IMR-90 (cell line): ENCODE measurements at regions of chr5 and their contacts with region 1.

Region 1: GRCh38 chr5:123720955-123721354 is 209.0 kb downstream of the CSNK1G3 start:
- DNase-seq: peak; percentile 7
- ATAC-seq: no peak
- H3K4me3 ChIP-seq: no peak overlapping the region
- H3K27ac ChIP-seq: no peak overlapping the region
- H3K4me1 ChIP-seq: peaks cover 4% of the 10 kb centered on the region; the same call in 1 of the 2 replicates
- H3K27me3 ChIP-seq: no peaks in the 10 kb centered on the region
- CTCF ChIP-seq: no peak
- POLR2A ChIP-seq: no peak
- RAD21 ChIP-seq: no peak

Region 2: DNA sequence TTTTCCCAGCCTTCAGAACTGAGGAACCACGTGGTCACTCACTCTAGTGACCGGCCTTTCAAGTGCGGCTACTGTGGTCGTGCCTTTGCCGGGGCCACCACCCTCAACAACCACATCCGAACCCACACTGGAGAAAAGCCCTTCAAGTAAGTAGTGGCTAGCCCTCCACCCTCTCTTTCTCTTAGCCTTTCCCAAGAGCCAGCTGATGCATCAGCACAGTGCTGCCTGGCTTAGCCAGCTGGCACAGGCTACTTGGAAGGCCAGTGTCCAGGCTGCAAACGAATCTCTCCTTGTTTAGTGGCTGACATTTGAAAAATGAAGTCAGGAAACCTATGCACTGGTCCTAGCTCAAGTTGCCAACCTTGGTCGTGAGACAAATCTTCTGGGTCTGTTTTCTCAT is 540.8 kb before region 1 on chr5:
- CTCF ChIA-PET with region 1: no interaction called
- POLR2A ChIA-PET with region 1: no interaction called
- dilution Hi-C with region 1: no loop called
- in situ Hi-C with region 1: no loop called
- intact Hi-C with region 1: no loop called
- DNase-seq: no peak
- ATAC-seq: no peak
- H3K4me3 ChIP-seq: no peak overlapping the region
- H3K27ac ChIP-seq: no peak overlapping the region
- H3K4me1 ChIP-seq: no peaks in the 10 kb centered on the region; the same call in 1 of the 2 replicates
- H3K27me3 ChIP-seq: no peaks in the 10 kb centered on the region; the same call in 1 of the 2 replicates
- CTCF ChIP-seq: no peak
- POLR2A ChIP-seq: no peak
- RAD21 ChIP-seq: no peak

Region 3: DNA sequence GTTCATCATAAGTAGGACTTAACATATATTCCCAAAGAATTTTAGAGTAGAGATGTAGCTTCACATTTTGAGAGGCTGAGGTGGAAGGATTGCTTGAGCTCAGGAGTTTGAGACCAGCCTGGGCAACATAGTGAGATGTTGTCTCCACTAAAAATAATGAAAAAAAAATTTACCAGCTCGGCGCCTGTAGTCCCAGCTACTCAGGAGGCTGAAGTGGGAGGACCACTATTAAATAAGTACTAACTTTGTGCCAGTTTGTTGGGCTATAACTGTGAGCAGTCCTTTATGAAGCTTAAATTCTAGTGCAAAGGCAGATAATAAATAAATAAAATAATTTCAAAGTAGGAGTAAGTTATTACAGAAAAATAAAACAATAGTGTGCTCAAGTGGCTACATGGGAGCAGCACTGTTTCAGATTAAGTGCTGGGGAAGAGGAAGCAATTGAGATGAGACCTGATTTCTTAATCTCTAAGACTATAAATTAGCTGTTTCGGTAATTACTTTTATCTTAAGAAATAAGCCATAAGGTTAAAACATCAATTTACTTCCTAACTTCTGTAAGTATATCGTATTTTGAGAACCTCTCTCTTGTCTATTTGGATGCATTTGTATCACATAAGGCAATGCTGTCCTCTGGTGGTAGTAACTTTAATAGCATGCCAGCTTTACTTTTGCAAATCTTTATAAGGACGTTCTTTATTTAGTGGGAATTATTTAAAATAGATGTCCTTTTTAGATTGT is 110.1 kb before region 1 on chr5:
- CTCF ChIA-PET with region 1: no interaction called
- POLR2A ChIA-PET with region 1: no interaction called
- dilution Hi-C with region 1: no loop called
- in situ Hi-C with region 1: no loop called
- intact Hi-C with region 1: no loop called
- DNase-seq: peak; percentile 80
- ATAC-seq: peak; percentile 81
- H3K4me3 ChIP-seq: no peak overlapping the region
- H3K27ac ChIP-seq: no peak overlapping the region
- H3K4me1 ChIP-seq: no peaks in the 10 kb centered on the region
- H3K27me3 ChIP-seq: no peaks in the 10 kb centered on the region
- CTCF ChIP-seq: peak; percentile 98
- POLR2A ChIP-seq: no peak
- RAD21 ChIP-seq: peak; percentile 93

Region 4: GRCh38 chr5:123748239-123748638 is 27.3 kb after region 1 on chr5:
- CTCF ChIA-PET with region 1: no interaction called
- POLR2A ChIA-PET with region 1: no interaction called
- dilution Hi-C with region 1: no loop called
- in situ Hi-C with region 1: no loop called
- intact Hi-C with region 1: loop called (anchors 1 kb)
- DNase-seq: no peak
- ATAC-seq: no peak
- H3K4me3 ChIP-seq: no peak overlapping the region
- H3K27ac ChIP-seq: no peak overlapping the region
- H3K4me1 ChIP-seq: 0 out of 2 replicates have a peak, but pooled peaks cover 2% of the 10 kb centered on the region
- H3K27me3 ChIP-seq: no peaks in the 10 kb centered on the region
- CTCF ChIP-seq: no peak
- POLR2A ChIP-seq: no peak
- RAD21 ChIP-seq: no peak

Region 5: GRCh38 chr5:124649491-124650146 is 928.7 kb after region 1 on chr5:
- CTCF ChIA-PET with region 1: no interaction called
- POLR2A ChIA-PET with region 1: no interaction called
- dilution Hi-C with region 1: no loop called
- in situ Hi-C with region 1: no loop called
- intact Hi-C with region 1: no loop called
- DNase-seq: peak; percentile 93
- ATAC-seq: peak; percentile 23; the same call in 1 of the 2 replicates
- H3K4me3 ChIP-seq: no peak overlapping the region
- H3K27ac ChIP-seq: peak overlapping the region; percentile 85
- H3K4me1 ChIP-seq: peaks cover 23% of the 10 kb centered on the region
- H3K27me3 ChIP-seq: no peaks in the 10 kb centered on the region
- CTCF ChIP-seq: no peak
- POLR2A ChIP-seq: no peak
- RAD21 ChIP-seq: 0 out of 2 replicates have a peak, but pooled peaks have one; percentile 8